Dendritic cell treated with granulocyte-macrophage colony-stimulating factor and Interleukin-4, amounts not matched to agents 40 ng/mL and 50 ng/mL, for 4 days (primary cell): ENCODE measurements at regions of chr7 and their contacts with region 1.

Region 1: GRCh38 chr7:129468087-129468486 is 33.9 kb downstream of the STRIP2 start:
- H3K4me3 Mint-ChIP-seq: no peak overlapping the region
- H3K27ac Mint-ChIP-seq: no peak overlapping the region
- H3K4me1 Mint-ChIP-seq: no peaks in the 10 kb centered on the region
- H3K27me3 Mint-ChIP-seq: peaks cover 4% of the 10 kb centered on the region

Region 2: GRCh38 chr7:129218514-129219062 is 249.5 kb before region 1 on chr7:
- intact Hi-C with region 1: loop called (anchors 1 kb)
- H3K4me3 Mint-ChIP-seq: no peak overlapping the region
- H3K27ac Mint-ChIP-seq: no peak overlapping the region
- H3K4me1 Mint-ChIP-seq: peaks cover 24% of the 10 kb centered on the region
- H3K27me3 Mint-ChIP-seq: peaks cover 11% of the 10 kb centered on the region

Region 3: GRCh38 chr7:129343099-129343700 is 124.9 kb before region 1 on chr7:
- intact Hi-C with region 1: loop called (anchors 1 kb)
- H3K4me3 Mint-ChIP-seq: no peak overlapping the region
- H3K27ac Mint-ChIP-seq: no peak overlapping the region
- H3K4me1 Mint-ChIP-seq: peaks cover 14% of the 10 kb centered on the region
- H3K27me3 Mint-ChIP-seq: no peaks in the 10 kb centered on the region

Region 4: DNA sequence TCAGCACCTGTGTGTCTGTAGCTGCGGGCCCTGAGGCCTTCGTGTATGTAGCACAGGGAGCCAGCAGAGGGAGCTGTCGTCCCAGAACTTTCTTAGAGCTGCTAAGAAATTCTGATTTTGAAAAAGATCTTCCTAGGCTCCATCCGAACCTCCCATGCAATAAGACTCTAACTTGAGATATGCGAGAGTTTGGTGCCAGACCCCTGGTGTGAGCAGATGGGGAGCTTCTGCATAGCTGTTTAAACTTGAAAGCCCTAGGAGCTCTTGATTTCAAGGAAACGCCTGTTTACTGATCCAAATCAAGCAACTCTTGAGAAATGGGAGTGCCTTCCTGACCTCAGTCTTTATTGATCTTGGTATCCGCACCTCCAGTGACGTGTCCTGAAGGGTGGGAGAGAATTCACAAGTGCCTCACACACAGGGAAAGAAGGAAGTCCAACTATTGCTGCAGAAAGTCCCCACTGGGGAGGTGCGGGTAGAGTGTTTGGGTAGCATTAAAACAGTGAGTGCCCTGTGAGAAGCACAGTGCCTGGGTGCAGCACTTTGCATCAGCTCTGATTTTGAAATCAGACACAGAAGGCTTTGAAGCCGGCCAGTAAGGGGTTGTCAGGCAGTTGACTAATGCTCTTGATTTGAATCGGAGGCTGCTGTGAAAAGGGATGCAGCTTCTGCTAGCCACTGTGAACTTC is 100.2 kb before region 1 on chr7:
- intact Hi-C with region 1: loop called (anchors 1 kb)
- H3K4me3 Mint-ChIP-seq: peak overlapping the region; percentile 6
- H3K27ac Mint-ChIP-seq: peak overlapping the region; percentile 41
- H3K4me1 Mint-ChIP-seq: peaks cover 18% of the 10 kb centered on the region
- H3K27me3 Mint-ChIP-seq: no peaks in the 10 kb centered on the region

Region 5: DNA sequence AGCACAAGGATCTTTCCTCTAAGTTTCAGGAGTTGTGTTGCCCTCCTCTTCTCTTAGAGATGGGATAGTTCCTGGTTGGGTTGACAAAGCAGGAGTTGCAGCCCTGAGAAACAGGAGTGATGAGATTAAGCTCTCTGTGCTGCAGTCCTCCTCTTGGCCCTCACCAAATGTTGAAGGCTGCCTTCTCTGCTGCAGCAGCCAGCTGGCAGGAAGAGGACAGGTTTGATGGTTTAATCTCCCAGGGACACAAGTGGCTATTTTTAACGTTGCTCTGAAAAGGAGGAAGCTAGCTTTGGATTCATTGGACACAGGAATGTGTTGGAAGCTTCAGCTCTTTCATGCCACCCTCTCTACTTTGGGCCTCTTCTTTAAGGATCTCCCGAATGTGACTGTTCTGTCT is 24.5 kb before region 1 on chr7:
- intact Hi-C with region 1: no loop called
- H3K4me3 Mint-ChIP-seq: no peak overlapping the region
- H3K27ac Mint-ChIP-seq: no peak overlapping the region
- H3K4me1 Mint-ChIP-seq: peaks cover 14% of the 10 kb centered on the region
- H3K27me3 Mint-ChIP-seq: peaks cover 3% of the 10 kb centered on the region